ENCODE measurements at regions of chr7 and their contacts with region 1.

Region 1: GRCh38 chr7:100516135-100516812 is 22.7 kb upstream of the AGFG2 start:
- DNase-seq: peak; percentile 13 to 82 (median 57)
- ATAC-seq: peak; percentile 96 to 98
- H3K4me3 Mint-ChIP-seq: peak overlapping the region; percentile 46 to 85 (median 69)
- H3K27ac Mint-ChIP-seq: peak overlapping the region; percentile 57 to 90 (median 79)
- H3K4me1 Mint-ChIP-seq: peaks cover 21 to 43% (median 34%) of the 10 kb centered on the region in 4 donors
- H3K27me3 Mint-ChIP-seq: peaks cover 0 to 1% (median 0%) of the 10 kb centered on the region in 5 donors

Region 2: DNA sequence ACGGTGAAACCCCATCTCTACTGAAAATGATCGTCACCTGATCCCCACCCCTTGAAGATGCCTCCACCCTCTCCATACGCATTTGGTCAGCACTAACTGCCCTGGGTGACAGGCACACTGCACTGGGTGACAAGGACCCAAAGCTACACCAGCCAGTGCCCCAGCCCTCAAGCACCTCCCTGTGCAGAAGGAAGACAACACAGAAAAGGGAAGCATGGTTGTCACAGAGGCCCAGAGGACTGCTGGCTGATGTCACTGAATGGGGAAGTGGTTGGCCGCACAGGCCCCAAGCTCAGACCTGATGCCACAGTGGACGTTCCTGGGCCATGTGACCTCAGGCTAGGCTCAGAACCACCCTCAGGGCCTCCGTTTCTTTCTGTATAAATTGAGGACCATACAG is 147.2 kb before region 1 on chr7:
- POLR2A ChIA-PET with region 1: no interaction called
- DNase-seq: peak in 2 of 10 donors; percentile 55 to 67
- ATAC-seq: peak; percentile 15 to 56
- H3K4me3 Mint-ChIP-seq: peak overlapping the region in 1 of 10 donors; percentile 75
- H3K27ac Mint-ChIP-seq: peak overlapping the region in 9 of 10 donors; percentile 63 to 88 (median 79)
- H3K4me1 Mint-ChIP-seq: peaks cover 21 to 84% (median 57%) of the 10 kb centered on the region in 4 donors
- H3K27me3 Mint-ChIP-seq: no peaks in the 10 kb centered on the region

Region 3: DNA sequence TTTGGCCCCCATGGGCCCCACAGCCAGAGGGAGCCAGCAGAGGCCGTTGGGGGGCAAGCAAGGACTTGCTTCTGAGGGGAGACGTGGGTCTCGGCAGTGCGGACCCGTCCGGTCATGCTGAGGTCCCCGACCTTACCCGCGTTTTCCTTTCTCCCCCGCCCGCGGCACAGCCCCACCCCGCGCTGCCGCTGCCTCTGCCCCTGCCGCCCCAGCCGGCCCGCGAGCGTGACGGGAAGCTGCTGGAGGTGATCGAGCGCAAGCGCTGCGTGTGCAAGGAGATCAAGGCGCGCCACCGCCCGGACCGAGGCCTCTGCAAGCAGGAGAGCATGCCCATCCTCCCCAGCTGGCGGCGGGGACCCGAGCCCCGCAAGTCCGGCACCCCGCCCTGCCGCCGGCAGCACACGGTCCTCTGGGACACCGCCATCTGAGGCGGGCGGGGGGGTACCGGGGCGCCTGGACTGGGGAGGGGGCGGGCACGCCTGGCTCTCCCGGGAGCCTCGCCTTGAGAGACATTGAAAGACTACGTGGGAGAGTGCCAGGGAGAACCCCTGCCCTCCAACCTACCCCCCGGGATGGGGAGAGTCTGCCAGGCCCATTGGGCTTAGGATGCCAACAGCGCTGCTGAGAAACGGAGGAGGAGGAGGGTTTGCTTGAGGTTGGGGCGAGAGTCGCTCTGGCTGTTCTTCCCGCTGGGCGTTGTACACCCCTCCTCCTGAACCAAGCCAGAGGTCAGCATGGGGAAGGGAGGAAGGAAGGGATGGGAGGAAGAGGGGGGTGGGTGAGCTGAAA is 22.6 kb before region 1 on chr7:
- POLR2A ChIA-PET with region 1: interaction called, 12 read pairs
- DNase-seq: peak; percentile 34 to 74 (median 54)
- ATAC-seq: peak; percentile 93 to 97
- H3K4me3 Mint-ChIP-seq: peak overlapping the region; percentile 47 to 87 (median 77)
- H3K27ac Mint-ChIP-seq: peak overlapping the region in 7 of 10 donors; percentile 31 to 82 (median 70)
- H3K4me1 Mint-ChIP-seq: peaks cover 7 to 36% (median 16%) of the 10 kb centered on the region in 4 donors
- H3K27me3 Mint-ChIP-seq: peaks cover 0 to 12% (median 0%) of the 10 kb centered on the region in 5 donors